ENCODE measurements at regions of chr3 and their contacts with region 1.

Region 1: GRCh38 chr3:51813539-51813938 is 34.5 kb upstream of the IQCF6 start:
- DNase-seq: no peak
- H3K4me3 ChIP-seq: no peak overlapping the region
- H3K27ac ChIP-seq: no peak overlapping the region
- H3K4me1 ChIP-seq: no peaks in the 10 kb centered on the region
- H3K27me3 ChIP-seq: no peaks in the 10 kb centered on the region
- CTCF ChIP-seq: no peak
- EP300 ChIP-seq: no peak
- POLR2A ChIP-seq: no peak
- RAD21 ChIP-seq: no peak

Region 2: DNA sequence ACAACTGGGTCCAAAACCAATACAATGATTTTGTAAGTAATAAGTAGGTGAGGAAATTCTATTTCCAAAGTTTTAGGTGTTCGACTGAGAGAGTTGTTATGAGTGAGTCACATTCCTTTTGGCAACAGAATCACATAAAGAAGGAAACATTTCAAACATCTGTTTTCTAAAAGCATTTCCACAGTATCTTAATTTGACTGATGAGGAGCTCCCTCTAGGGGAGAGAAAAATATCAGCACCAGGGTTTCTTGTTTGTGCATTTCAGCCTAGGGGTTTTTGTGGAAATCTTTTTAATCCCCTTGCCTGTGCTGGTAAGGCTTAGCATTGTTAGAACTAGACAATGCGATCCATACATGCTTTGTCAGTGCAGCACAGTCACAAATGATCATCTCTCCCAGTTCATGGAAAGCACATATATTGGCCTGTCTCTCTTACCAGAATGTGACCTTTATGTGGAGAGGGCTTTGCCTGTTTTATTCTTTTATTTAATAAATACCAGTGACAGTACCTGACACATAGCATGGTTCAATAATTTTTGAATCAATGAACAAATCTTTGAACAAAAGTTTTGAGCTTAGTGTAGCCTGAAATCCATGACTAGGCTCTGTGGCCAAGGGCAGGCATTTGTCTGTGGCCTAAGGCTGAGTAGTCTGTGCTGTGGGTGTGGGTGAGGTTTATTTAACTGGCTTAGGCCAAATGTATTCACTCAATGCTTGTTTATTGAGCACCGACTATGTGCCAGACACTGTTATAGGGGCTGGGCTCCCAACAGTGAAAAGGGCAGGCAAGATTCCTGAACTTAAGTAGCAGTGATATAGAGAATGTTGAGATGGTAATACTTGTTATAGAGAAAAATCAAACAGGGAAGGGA is 13.4 kb before region 1 on chr3:
- CTCF ChIA-PET with region 1: interaction called, 80 read pairs
- POLR2A ChIA-PET with region 1: interaction called, 3 read pairs
- DNase-seq: peak in 1 of 2 experiments; percentile 52
- H3K4me3 ChIP-seq: no peak overlapping the region
- H3K27ac ChIP-seq: no peak overlapping the region
- H3K4me1 ChIP-seq: peaks cover 6 to 24% (median 20%) of the 10 kb centered on the region in 4 experiments; a peak in 6 of 7 replicates
- H3K27me3 ChIP-seq: no peaks in the 10 kb centered on the region
- CTCF ChIP-seq: peak in 2 of 3 experiments; percentile 73; a peak in 3 of 4 replicates
- EP300 ChIP-seq: no peak
- POLR2A ChIP-seq: no peak
- RAD21 ChIP-seq: peak; percentile 81 to 83

Measured in H1 (cell line).